ENCODE measurements at regions of chr2 and their contacts with region 1.

Region 1: GRCh38 chr2:121736462-121737341 is at the start of gene NIFK:
- DNase-seq: peak; percentile 96
- ATAC-seq: peak; percentile 93
- H3K4me3 ChIP-seq: peak within 1 kb of the TSS; percentile 100
- H3K27ac ChIP-seq: peak within 1 kb of the TSS; percentile 68
- H3K4me1 ChIP-seq: peaks cover 9% of the 10 kb centered on the region
- H3K27me3 ChIP-seq: no peaks in the 10 kb centered on the region
- CTCF ChIP-seq: no peak
- total RNA-seq, gene NIFK: 42.1 and 64.1 TPM in 2 replicates

Region 2: DNA sequence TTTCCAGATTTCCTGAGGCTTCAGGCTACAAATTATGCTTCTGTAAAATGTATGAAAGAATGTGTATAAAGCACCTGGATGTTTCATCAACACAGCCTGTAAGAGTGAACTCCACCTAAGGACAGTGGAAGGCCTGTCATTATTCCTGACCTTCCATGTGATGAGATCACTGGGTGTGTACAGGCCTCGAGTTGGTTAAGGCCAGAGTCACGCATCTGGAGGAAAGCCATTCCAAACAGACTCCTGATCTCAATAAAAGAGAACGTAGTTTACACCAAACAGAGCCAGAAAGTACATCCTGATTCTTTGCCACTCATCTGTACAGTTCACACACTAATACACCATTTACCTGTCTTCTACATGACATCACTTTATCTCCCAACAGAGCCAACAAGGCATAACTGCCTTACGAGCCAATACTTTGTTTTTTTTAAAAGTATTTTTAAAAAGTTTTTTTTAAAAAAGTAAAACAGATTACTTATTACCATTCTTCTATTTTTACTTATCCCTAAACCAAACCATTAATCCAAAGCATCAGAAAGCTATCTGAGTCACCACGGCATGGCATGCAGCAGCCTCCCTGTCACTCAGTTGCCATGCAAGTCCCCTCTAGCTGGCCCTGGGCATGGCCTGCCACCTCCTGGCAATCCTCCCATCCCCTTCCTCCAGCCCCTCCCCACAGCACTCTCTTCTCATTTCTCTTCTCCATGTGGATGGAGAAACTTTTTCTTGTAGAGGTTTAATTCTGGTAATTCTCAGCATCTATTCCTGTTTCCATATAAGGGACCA is 372.9 kb before region 1 on chr2:
- CTCF ChIA-PET with region 1: no interaction called
- POLR2A ChIA-PET with region 1: interaction called, 21 read pairs
- intact Hi-C with region 1: no loop called
- DNase-seq: peak; percentile 94
- ATAC-seq: peak; percentile 68
- H3K4me3 ChIP-seq: no peak overlapping the region; the same call in 1 of the 2 replicates
- H3K27ac ChIP-seq: peak overlapping the region; percentile 95
- H3K4me1 ChIP-seq: peaks cover 75% of the 10 kb centered on the region
- H3K27me3 ChIP-seq: no peaks in the 10 kb centered on the region
- CTCF ChIP-seq: no peak

Region 3: DNA sequence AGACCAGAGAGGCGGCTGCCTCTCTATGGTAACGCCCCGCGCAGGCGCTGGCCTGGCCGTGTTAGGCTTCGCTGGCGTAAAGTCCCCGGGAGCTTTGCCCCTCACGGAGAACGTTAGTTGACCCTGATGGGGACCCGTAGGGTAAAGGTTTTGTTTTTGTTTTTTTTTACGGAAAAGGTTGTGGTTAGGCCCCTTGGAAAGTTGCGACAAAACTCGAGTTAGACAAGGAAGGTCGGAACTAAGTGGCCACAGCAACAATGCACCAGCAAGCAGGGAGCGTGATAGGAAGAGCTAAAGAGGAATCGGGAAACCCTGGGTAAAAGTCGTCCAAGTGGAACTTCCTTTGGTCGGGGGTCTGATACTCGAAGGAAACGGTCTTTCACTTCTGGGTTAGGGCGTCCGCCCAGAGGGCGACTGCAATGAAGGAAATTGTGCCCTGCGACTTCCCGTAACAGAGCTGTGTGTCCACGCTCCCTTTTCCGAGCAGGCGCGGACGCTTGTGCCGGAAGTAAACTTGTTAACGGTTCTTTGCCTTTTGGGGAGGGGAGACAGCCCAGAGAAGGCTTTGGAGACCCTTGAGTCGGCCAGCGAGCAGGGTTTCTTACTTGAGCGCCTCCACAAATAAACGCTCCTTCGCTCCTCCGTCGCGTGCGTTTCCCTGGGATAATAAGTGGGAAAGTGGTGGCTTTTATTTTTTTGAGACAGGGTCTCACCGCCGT is 86.9 kb before region 1 on chr2:
- CTCF ChIA-PET with region 1: interaction called, 22 read pairs
- POLR2A ChIA-PET with region 1: no interaction called
- intact Hi-C with region 1: no loop called
- DNase-seq: peak; percentile 96
- ATAC-seq: peak; percentile 90
- H3K4me3 ChIP-seq: peak overlapping the region; percentile 87
- H3K27ac ChIP-seq: peak overlapping the region; percentile 85
- H3K4me1 ChIP-seq: peaks cover 21% of the 10 kb centered on the region
- H3K27me3 ChIP-seq: no peaks in the 10 kb centered on the region
- CTCF ChIP-seq: no peak

Region 4: GRCh38 chr2:121755236-121756111 is 18.8 kb after region 1 on chr2 and contains the start of gene TSN:
- CTCF ChIA-PET with region 1: no interaction called
- POLR2A ChIA-PET with region 1: no interaction called
- intact Hi-C with region 1: loop called (anchors 2 kb)
- DNase-seq: peak; percentile 98
- ATAC-seq: peak; percentile 98
- H3K4me3 ChIP-seq: peak within 1 kb of the TSS; percentile 97
- H3K27ac ChIP-seq: peak within 1 kb of the TSS; percentile 44
- H3K4me1 ChIP-seq: peaks cover 12% of the 10 kb centered on the region; the same call in 1 of the 2 replicates
- H3K27me3 ChIP-seq: no peaks in the 10 kb centered on the region
- CTCF ChIP-seq: no peak
- total RNA-seq, gene TSN: 55.0 and 83.0 TPM in 2 replicates

Measured in PC-3 (cell line).